Activated B cell treated with CpG ODN at 0.5 μM for 24 hours (primary cell): ENCODE measurements at regions of chr17 and their contacts with region 1.

Region 1: DNA sequence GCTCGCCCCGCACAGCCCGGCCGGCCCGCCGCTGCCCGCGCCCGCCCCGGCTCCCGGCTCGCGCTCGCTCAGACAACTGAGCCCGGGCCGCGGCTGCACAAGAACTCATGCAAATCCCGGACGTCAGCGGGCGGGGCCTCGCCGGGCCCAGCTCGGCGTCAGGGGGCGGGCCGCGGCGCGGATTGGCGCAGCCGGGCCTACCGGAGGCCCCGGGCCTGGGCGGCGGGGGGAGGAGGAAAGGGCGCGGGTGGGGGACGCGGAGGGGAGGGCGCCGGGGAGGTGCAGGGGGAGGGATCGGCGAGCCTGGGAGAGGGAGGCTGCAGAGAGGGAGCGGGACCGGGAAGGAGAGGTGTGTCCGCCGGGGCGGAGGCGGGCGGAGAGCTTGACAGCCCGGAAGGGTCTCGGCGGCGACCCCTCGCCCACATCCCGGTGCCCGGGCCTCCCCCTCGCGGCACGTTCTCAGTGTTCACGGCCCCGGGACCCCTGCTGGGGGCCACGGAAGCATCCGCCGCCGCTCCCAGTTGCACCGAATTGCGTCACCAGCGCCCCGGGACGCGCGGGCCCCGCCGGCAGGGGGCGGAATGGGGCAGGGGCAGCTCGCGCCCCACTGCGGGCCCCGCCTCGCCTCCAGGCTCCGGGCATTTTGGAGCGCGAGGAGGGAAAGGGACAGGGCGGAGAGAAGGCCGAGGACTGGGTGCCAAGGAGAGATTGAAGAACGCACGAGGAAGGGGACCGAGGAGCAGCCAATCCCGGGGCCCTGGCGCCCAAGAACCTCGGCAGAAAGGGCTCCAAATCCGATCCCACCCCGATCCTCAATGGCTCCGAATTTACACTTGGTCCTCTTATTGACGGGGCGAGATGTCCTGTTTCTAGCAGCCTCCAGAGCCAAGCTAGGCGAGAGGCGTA is at the start of gene CBX4:
- DNase-seq: peak; percentile 87
- ATAC-seq: peak; percentile 77
- H3K4me3 Mint-ChIP-seq: peak within 1 kb of the TSS; percentile 95
- H3K27ac Mint-ChIP-seq: peak within 1 kb of the TSS; percentile 95
- H3K4me1 Mint-ChIP-seq: peaks cover 64% of the 10 kb centered on the region
- H3K27me3 Mint-ChIP-seq: peaks cover 20% of the 10 kb centered on the region
- CTCF ChIP-seq: peak; percentile 46
- total RNA-seq, gene CBX4: 55.6 and 56.3 TPM in 2 replicates

Region 2: DNA sequence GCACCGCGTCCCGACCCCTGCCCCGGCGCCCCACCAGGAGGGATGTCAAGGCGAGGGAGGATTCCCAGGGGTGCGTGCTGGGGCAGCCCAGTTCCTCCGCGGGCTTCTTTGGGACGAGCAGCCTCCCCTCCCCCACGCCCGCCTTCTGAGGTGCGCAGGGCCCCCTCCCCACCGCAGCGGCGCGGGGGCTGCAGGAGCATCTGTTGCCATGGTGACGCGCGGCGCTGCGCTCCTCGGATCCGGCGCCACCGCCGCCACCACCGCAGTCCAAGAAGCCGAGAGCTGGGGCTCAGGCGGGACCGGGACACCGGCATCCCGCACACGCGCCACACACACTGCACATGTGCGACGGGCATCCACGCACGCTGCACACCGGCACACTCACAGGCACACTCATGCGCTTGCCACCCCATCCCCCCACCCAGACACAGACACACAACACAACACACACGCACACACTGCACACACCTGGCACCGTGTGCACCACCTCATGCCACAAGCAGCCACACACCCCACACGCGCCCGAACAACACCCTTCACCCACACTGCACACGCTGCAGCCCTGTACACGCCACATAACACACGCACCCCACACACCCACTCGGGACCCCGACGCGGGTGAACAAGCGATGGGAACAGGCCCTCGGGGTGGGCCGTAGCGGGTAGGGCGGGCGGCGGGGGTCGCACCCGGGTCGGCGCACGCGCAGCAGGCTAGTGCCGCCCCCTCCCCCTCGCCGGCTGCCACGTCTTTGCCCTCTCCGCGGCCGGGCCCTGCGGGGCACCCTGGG is 91.9 kb before region 1 on chr17:
- CTCF ChIA-PET with region 1: interaction called, 4 read pairs
- POLR2A ChIA-PET with region 1: interaction called, 5 read pairs
- intact Hi-C with region 1: loop called (anchors 2 kb)
- DNase-seq: no peak
- ATAC-seq: no peak
- H3K4me3 Mint-ChIP-seq: no peak overlapping the region
- H3K27ac Mint-ChIP-seq: no peak overlapping the region
- H3K4me1 Mint-ChIP-seq: peaks cover 23% of the 10 kb centered on the region
- H3K27me3 Mint-ChIP-seq: peaks cover 41% of the 10 kb centered on the region
- CTCF ChIP-seq: no peak

Region 3: DNA sequence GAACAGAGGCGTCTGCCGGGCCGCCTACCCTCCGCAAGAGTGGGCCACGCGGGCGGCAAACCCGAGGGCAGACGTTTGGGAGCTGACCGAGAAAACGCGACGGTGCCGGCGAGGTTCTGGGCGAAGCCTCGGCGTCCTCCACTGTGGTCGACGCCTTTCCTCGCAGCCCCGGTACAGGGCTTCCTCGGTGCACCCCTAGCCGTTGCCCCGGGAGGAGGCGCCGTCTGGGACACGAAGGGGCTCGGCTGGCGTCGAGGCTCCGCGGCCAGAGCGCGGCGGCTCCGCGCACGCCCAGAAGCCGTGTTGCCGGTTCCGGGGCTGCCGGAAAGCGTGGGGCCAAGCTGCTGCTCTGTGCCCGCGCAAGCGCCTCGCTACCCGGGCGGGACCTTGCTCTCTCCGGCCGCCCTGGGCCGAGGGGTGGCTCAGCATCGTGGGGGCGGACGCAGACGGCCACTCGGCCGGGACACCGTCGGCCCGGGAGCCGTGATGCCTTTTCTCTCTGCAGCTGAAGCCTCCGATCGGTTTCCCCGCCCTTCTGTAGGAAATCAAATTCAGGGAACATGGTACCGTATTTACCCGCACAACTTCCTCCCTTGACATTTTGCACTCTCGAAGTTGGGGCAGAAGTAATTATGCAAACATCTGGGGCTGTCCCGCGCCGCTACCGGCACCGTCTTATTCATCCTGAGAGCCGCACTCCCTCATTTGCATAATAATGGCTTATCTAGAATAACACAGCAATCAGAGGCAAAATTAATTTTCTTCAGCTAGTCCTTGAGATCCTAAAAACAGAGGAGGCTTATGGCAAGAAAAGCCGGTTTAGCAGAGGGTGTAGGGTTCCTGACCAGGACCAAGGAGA is 35.4 kb before region 1 on chr17:
- CTCF ChIA-PET with region 1: interaction called, 4 read pairs
- POLR2A ChIA-PET with region 1: interaction called, 212 read pairs
- intact Hi-C with region 1: loop called (anchors 1 kb)
- DNase-seq: peak; percentile 65
- ATAC-seq: peak; percentile 87
- H3K4me3 Mint-ChIP-seq: peak overlapping the region; percentile 81
- H3K27ac Mint-ChIP-seq: peak overlapping the region; percentile 91
- H3K4me1 Mint-ChIP-seq: peaks cover 43% of the 10 kb centered on the region
- H3K27me3 Mint-ChIP-seq: peaks cover 61% of the 10 kb centered on the region
- CTCF ChIP-seq: no peak

Region 4: GRCh38 chr17:79933863-79934652 is 94.4 kb after region 1 on chr17:
- CTCF ChIA-PET with region 1: interaction called, 4 read pairs
- POLR2A ChIA-PET with region 1: interaction called, 38 read pairs
- intact Hi-C with region 1: loop called (anchors 2 kb)
- DNase-seq: peak; percentile 48
- ATAC-seq: peak; percentile 25
- H3K4me3 Mint-ChIP-seq: peak overlapping the region; percentile 64
- H3K27ac Mint-ChIP-seq: peak overlapping the region; percentile 92
- H3K4me1 Mint-ChIP-seq: peaks cover 89% of the 10 kb centered on the region
- H3K27me3 Mint-ChIP-seq: peaks cover 3% of the 10 kb centered on the region
- CTCF ChIP-seq: no peak

Region 5: DNA sequence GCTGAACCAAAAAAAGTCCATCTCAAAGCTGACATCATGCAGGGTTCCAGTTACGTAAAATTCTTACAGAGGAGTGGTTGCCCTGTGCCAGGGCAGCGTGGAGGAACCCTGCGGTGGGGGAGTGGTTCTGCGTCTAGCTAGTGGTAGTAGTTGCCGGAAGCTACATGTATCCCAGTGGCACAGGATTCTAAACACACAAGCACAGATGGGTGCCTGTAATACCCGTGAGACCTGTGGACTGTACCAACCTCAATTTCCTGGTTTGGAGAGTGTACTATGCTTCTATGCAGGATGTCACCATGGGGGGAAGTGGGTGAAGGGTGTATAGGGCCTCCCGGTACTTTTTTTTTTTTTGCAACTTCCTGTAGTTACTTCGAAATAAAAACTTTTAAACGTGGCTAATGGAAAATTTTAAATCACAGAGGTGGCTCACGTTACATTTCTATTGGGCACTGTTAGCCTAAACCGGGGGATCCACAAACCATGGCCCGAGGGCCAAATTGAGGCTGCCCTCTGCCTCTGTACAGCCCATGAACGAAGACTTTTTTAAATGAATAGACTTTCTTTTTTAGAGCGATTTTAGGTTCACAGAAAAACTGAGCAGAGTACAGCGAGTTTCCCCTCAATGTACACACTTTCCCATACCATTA is 157.5 kb after region 1 on chr17:
- CTCF ChIA-PET with region 1: no interaction called
- POLR2A ChIA-PET with region 1: interaction called, 13 read pairs
- intact Hi-C with region 1: loop called (anchors 2 kb)
- DNase-seq: peak; percentile 41
- ATAC-seq: peak; percentile 97
- H3K4me3 Mint-ChIP-seq: peak overlapping the region; percentile 68
- H3K27ac Mint-ChIP-seq: peak overlapping the region; percentile 93
- H3K4me1 Mint-ChIP-seq: peaks cover 46% of the 10 kb centered on the region
- H3K27me3 Mint-ChIP-seq: peaks cover 2% of the 10 kb centered on the region
- CTCF ChIP-seq: no peak

Region 6: GRCh38 chr17:80147035-80147836 is 307.6 kb after region 1 on chr17 and contains the start of gene EIF4A3:
- CTCF ChIA-PET with region 1: no interaction called
- POLR2A ChIA-PET with region 1: no interaction called
- intact Hi-C with region 1: loop called (anchors 5 kb)
- DNase-seq: peak; percentile 95
- ATAC-seq: peak; percentile 88
- H3K4me3 Mint-ChIP-seq: peak within 1 kb of the TSS; percentile 98
- H3K27ac Mint-ChIP-seq: peak within 1 kb of the TSS; percentile 90
- H3K4me1 Mint-ChIP-seq: peaks cover 42% of the 10 kb centered on the region
- H3K27me3 Mint-ChIP-seq: no peaks in the 10 kb centered on the region
- CTCF ChIP-seq: no peak
- total RNA-seq, gene EIF4A3: 84.0 and 88.1 TPM in 2 replicates